Body of pancreas (tissue), 4 donors: ENCODE measurements at regions of chr3 and their contacts with region 1.

Region 1: DNA sequence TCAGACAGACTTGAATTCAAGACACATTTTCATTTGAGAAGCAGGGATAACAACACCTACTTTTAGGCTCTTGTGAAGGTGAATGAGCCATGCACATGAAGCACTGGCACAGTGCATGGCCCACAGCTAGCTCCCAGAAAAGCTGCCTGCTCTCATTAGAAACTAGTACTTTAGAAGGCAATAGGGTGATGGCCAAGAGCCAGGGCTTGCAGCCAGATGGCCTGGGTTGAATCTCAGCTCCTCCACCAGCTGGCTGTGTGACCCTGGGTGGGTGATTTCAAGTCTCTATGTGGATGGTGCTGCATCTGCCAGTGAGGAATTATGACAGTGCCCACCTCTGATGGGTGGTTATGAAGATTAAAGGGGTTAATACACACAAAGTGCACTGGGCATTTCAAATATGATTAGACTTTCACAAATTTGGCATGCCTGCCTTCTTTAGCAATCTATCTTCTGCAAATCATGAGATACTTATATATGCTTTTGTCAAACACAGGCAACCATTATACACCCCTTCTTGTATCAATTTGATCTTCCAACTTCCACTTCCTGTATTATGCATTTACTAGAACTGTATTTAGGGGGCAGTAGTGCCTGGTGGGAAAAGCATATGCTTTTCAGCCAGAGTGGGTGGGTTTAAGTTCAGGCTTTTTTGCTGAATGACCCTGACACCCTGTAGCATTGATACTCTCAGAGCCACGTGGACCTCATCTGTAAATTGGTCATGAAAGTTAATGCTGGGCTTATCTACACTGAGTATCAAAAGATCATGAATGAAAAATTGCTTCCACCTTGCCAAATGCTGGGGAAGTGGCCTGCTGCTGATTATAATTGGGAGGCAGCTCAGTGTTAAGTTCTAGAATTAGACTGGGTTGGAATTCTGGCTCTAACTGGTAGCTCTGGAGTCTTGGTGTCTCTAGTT is 34.7 kb upstream of the RBP1 start:
- DNase-seq: peak; percentile 59 to 87 (median 66)
- ATAC-seq: no peak
- H3K4me3 ChIP-seq: no peak overlapping the region
- H3K27ac ChIP-seq: no peak overlapping the region
- H3K4me1 ChIP-seq: peaks cover 12% of the 10 kb centered on the region
- H3K27me3 ChIP-seq: no peaks in the 10 kb centered on the region
- CTCF ChIP-seq: no peak
- POLR2A ChIP-seq: no peak

Region 2: GRCh38 chr3:139928708-139929505 is 354.6 kb after region 1 on chr3:
- intact Hi-C with region 1: loop called (anchors 10 kb)
- DNase-seq: no peak
- ATAC-seq: no peak
- H3K4me3 ChIP-seq: no peak overlapping the region
- H3K27ac ChIP-seq: no peak overlapping the region
- H3K4me1 ChIP-seq: no peaks in the 10 kb centered on the region
- H3K27me3 ChIP-seq: no peaks in the 10 kb centered on the region
- CTCF ChIP-seq: no peak
- POLR2A ChIP-seq: no peak